Activated naive CD8-positive, alpha-beta T cell treated with anti-CD3 and anti-CD28 coated beads, Interleukin-2, amount 10 ng/mL, durations not matched to agents 7 days and 5 days (primary cell): ENCODE measurements at regions of chr17 and their contacts with region 1.

Region 1: DNA sequence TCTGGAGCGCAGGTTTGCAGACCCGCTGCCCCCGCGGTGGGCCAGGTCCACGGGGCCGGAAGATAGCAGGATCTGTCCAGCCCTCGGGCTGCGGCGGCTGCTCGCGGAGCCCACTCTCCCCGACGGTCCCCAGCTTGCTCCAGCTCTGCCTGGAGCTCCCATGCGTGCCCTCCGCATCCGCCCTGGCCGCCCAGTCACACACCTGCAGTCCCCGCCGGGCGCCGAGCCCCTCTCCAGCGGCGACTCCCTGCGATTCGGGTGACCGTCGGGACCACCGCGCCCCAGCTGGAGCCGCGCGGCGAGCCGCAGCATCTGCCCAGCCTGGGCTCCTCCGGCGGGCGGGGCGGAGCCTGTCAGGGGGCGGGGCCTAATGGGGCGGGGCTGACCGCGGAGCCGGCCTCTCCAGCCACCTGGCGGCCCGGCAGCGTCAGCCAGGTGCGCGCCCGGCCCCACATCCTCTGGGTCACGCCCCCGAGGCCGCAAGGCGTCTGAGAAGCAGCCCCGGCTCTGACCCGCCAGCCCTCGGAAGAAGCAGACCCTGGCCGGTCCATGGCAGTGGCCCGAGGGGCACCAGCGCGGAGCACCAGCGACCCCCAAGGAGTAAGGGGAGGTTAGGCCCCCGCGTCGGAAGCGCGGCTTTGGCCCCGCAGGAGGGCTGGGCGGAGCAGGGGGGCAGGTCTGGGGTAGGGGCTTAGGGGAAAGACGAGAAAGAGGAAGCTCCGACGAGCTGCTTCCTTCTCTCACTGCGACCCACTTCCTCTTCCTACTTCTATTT is at the start of gene PIK3R5:
- DNase-seq: peak; percentile 86
- ATAC-seq: peak; percentile 69
- H3K4me3 Mint-ChIP-seq: peak within 1 kb of the TSS; percentile 98
- H3K27ac Mint-ChIP-seq: peak within 1 kb of the TSS; percentile 98
- H3K4me1 Mint-ChIP-seq: peaks cover 38% of the 10 kb centered on the region
- H3K27me3 Mint-ChIP-seq: no peaks in the 10 kb centered on the region
- total RNA-seq, gene PIK3R5: 81.4 to 84.0 TPM

Region 2: GRCh38 chr17:8900626-8901585 is 64.7 kb before region 1 on chr17:
- POLR2A ChIA-PET with region 1: interaction called, 54 read pairs
- DNase-seq: no peak
- ATAC-seq: no peak
- H3K4me3 Mint-ChIP-seq: peak overlapping the region; percentile 60
- H3K27ac Mint-ChIP-seq: peak overlapping the region; percentile 82
- H3K4me1 Mint-ChIP-seq: peaks cover 56% of the 10 kb centered on the region
- H3K27me3 Mint-ChIP-seq: no peaks in the 10 kb centered on the region

Region 3: GRCh38 chr17:8954339-8954738 is 11.2 kb before region 1 on chr17:
- POLR2A ChIA-PET with region 1: interaction called, 44 read pairs
- DNase-seq: peak; percentile 55
- ATAC-seq: peak; percentile 90
- H3K4me3 Mint-ChIP-seq: peak overlapping the region; percentile 77
- H3K27ac Mint-ChIP-seq: peak overlapping the region; percentile 93
- H3K4me1 Mint-ChIP-seq: peaks cover 76% of the 10 kb centered on the region
- H3K27me3 Mint-ChIP-seq: no peaks in the 10 kb centered on the region

Region 4: DNA sequence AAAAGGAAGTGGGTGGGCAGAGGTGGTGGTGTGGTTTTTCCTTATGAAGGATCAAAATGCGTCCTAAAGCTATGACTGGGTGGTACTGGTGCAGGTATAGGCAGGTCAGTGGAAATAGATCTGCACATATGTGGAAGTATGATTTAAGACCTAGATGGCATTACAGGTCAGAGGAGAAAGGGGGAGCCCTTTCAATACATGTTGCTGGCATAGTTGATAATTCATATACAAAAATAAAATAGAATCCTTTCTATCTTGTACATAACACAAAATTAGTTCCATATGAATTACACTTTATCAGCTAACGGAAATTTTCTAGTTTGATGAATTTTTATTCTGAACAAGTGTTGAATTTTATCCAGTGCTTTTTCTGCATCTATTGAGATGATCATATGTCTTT is 20.7 kb after region 1 on chr17:
- POLR2A ChIA-PET with region 1: no interaction called
- DNase-seq: no peak
- ATAC-seq: no peak
- H3K4me3 Mint-ChIP-seq: no peak overlapping the region
- H3K27ac Mint-ChIP-seq: no peak overlapping the region
- H3K4me1 Mint-ChIP-seq: peaks cover 9% of the 10 kb centered on the region
- H3K27me3 Mint-ChIP-seq: peaks cover 3% of the 10 kb centered on the region